Activated CD4-positive, alpha-beta T cell treated with anti-CD3 and anti-CD28 coated beads for 36 hours (primary cell): ENCODE measurements at regions of chr10 and their contacts with region 1.

Region 1: GRCh38 chr10:44914891-44915290 is 3.8 kb downstream of the TMEM72 start:
- DNase-seq: no peak
- ATAC-seq: no peak
- H3K4me3 Mint-ChIP-seq: no peak overlapping the region
- H3K27ac Mint-ChIP-seq: no peak overlapping the region
- H3K4me1 Mint-ChIP-seq: peaks cover 14% of the 10 kb centered on the region
- H3K27me3 Mint-ChIP-seq: no peaks in the 10 kb centered on the region

Region 2: GRCh38 chr10:44925224-44925623 is 10.3 kb after region 1 on chr10:
- CTCF ChIA-PET with region 1: no interaction called
- POLR2A ChIA-PET with region 1: no interaction called
- intact Hi-C with region 1: no loop called
- DNase-seq: peak; percentile 25
- ATAC-seq: peak; percentile 39
- H3K4me3 Mint-ChIP-seq: no peak overlapping the region
- H3K27ac Mint-ChIP-seq: no peak overlapping the region
- H3K4me1 Mint-ChIP-seq: no peaks in the 10 kb centered on the region
- H3K27me3 Mint-ChIP-seq: no peaks in the 10 kb centered on the region

Region 3: DNA sequence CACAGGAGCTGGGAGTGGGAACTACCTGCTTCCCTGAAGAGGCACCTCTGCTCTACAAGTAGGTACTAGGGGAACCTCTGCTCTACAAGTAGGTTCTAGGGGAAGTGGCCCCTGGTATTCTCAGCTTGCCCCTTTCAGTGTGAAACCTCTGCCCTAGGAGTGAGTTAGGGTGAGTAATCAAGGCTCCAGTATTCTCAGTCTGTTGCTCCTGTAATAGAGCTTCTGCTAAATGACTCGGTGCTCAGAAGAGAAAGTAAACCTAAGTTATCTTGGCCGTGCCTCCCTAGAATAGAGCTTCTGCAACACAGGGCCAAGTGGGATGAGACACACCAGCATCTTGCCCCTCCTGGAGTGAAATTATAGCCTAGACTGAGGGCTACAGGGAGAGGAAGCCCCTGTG is 31.3 kb after region 1 on chr10:
- CTCF ChIA-PET with region 1: interaction called, 3 read pairs
- POLR2A ChIA-PET with region 1: no interaction called
- intact Hi-C with region 1: loop called in 1 of 2 experiments (anchors 1 kb)
- DNase-seq: no peak
- ATAC-seq: peak; percentile 82
- H3K4me3 Mint-ChIP-seq: no peak overlapping the region
- H3K27ac Mint-ChIP-seq: no peak overlapping the region
- H3K4me1 Mint-ChIP-seq: peaks cover 2% of the 10 kb centered on the region
- H3K27me3 Mint-ChIP-seq: peaks cover 10% of the 10 kb centered on the region